ENCODE measurements at regions of chr19 and their contacts with region 1.

Region 1: GRCh38 chr19:40640744-40641143 is 39.6 kb downstream of the LTBP4 start:
- DNase-seq: no peak
- ATAC-seq: no peak
- H3K4me3 ChIP-seq: no peak overlapping the region
- H3K27ac ChIP-seq: no peak overlapping the region
- H3K4me1 ChIP-seq: peaks cover 5% of the 10 kb centered on the region; the same call in 1 of the 2 replicates
- H3K27me3 ChIP-seq: no peaks in the 10 kb centered on the region
- CTCF ChIP-seq: no peak
- EP300 ChIP-seq: no peak
- POLR2A ChIP-seq: no peak
- RAD21 ChIP-seq: no peak

Region 2: GRCh38 chr19:40305403-40305802 is 335.3 kb before region 1 on chr19:
- CTCF ChIA-PET with region 1: interaction called, 29 read pairs
- POLR2A ChIA-PET with region 1: no interaction called
- RAD21 ChIA-PET with region 1: interaction called, 13 read pairs
- SMC1A ChIA-PET with region 1: interaction called, 13 read pairs
- in situ Hi-C with region 1: no loop called
- intact Hi-C with region 1: no loop called
- DNase-seq: peak; percentile 38
- ATAC-seq: peak; percentile 87
- H3K4me3 ChIP-seq: no peak overlapping the region
- H3K27ac ChIP-seq: no peak overlapping the region
- H3K4me1 ChIP-seq: no peaks in the 10 kb centered on the region
- H3K27me3 ChIP-seq: no peaks in the 10 kb centered on the region
- CTCF ChIP-seq: peak; percentile 59 to 83 (median 77); a peak in 5 of 6 replicates
- EP300 ChIP-seq: no peak
- POLR2A ChIP-seq: no peak
- RAD21 ChIP-seq: peak; percentile 95

Region 3: GRCh38 chr19:40529093-40529954 is 111.4 kb before region 1 on chr19:
- CTCF ChIA-PET with region 1: interaction called, 13 read pairs
- POLR2A ChIA-PET with region 1: no interaction called
- RAD21 ChIA-PET with region 1: no interaction called
- SMC1A ChIA-PET with region 1: no interaction called
- in situ Hi-C with region 1: no loop called
- intact Hi-C with region 1: no loop called
- DNase-seq: peak; percentile 57
- ATAC-seq: peak; percentile 90
- H3K4me3 ChIP-seq: peak overlapping the region; percentile 32; the same call in 1 of the 2 replicates
- H3K27ac ChIP-seq: no peak overlapping the region
- H3K4me1 ChIP-seq: peaks cover 3% of the 10 kb centered on the region
- H3K27me3 ChIP-seq: no peaks in the 10 kb centered on the region; a peak in 1 of 4 replicates
- CTCF ChIP-seq: peak; percentile 95 to 98 (median 97)
- EP300 ChIP-seq: no peak
- POLR2A ChIP-seq: no peak
- RAD21 ChIP-seq: peak; percentile 38; the same call in 1 of the 2 replicates

Region 4: DNA sequence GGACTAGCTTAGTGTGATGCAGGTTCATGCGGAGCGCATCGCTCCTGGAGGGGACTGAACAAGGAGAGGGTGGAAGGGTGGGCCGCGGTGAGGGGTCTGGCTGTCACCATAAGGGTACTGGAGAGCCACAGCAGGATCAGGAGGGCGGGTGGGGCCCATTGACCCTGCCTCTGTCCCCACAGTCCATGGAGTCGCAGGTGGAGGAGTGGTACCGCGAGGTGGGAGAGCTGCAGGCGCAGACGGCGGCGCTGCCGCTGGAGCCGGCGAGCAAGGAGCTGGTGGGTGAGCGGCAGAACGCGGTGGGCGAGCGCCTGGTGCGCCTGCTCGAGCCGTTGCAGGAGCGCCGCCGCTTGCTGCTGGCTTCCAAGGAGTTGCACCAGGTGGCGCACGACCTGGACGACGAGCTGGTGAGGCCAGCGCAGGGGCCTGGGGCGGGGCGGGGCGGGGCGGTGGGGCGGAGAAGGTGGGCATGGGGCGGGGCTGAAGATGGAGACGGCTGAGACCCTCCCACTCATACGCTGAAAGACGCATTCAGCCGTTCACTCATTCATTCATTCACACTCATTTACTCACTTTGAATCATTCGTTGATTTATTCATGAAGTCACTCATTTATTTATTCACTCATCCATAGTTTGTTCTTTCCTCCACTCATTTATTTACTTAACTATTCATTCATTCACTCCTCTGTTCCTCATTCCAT is 91.6 kb before region 1 on chr19:
- CTCF ChIA-PET with region 1: interaction called, 28 read pairs
- POLR2A ChIA-PET with region 1: no interaction called
- RAD21 ChIA-PET with region 1: interaction called, 11 read pairs
- SMC1A ChIA-PET with region 1: interaction called, 3 read pairs
- in situ Hi-C with region 1: no loop called
- intact Hi-C with region 1: no loop called
- DNase-seq: no peak
- ATAC-seq: peak; percentile 97
- H3K4me3 ChIP-seq: no peak overlapping the region
- H3K27ac ChIP-seq: no peak overlapping the region
- H3K4me1 ChIP-seq: no peaks in the 10 kb centered on the region
- H3K27me3 ChIP-seq: peaks cover 0 to 3% of the 10 kb centered on the region in 2 experiments; a peak in 1 of 4 replicates
- CTCF ChIP-seq: peak in 2 of 3 experiments; percentile 53 to 63; a peak in 3 of 6 replicates
- EP300 ChIP-seq: no peak
- POLR2A ChIP-seq: no peak
- RAD21 ChIP-seq: peak; percentile 37

Region 5: DNA sequence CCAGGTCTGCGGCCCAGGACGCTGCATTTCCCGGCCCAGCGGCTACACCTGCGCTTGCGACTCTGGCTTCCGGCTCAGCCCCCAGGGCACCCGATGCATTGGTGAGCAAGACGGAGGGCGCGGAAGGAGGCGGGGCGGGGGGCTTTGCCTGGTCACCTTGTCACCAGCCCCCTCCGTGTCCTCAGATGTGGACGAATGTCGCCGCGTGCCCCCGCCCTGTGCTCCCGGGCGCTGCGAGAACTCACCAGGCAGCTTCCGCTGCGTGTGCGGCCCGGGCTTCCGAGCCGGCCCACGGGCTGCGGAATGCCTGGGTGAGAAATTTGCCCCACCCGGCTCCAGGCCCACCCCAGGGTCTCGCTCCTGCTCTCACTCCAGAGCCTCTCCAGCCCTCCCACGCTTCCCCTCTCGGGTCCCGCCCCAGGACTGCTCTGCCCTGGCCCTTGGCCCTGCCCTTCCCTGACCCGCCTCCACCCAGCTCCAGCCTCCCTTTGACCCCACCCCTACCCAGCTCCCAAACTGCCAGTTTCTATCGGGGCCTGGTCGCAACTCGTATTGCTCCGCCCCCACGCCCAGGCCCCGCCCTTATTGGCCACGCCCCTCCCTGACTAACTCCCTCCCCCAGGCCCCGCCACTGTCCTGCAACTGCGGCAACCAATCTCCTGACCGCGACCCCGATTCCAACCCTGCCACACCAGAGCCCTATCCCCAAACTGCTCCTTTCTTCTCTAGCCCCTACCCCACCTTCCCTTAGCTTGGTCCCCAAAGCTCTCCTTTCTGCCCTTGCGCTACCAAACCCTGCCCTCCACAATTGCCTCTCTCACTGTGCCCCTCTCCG is 31.0 kb before region 1 on chr19:
- CTCF ChIA-PET with region 1: interaction called, 106 read pairs
- POLR2A ChIA-PET with region 1: interaction called, 6 read pairs
- RAD21 ChIA-PET with region 1: interaction called, 49 read pairs
- SMC1A ChIA-PET with region 1: interaction called, 5 read pairs
- in situ Hi-C with region 1: no loop called
- intact Hi-C with region 1: no loop called
- DNase-seq: peak; percentile 70
- ATAC-seq: peak; percentile 74
- H3K4me3 ChIP-seq: peak overlapping the region; percentile 76
- H3K27ac ChIP-seq: no peak overlapping the region
- H3K4me1 ChIP-seq: peaks cover 17% of the 10 kb centered on the region
- H3K27me3 ChIP-seq: no peaks in the 10 kb centered on the region; a peak in 1 of 4 replicates
- CTCF ChIP-seq: 0 out of 6 replicates have a peak, but pooled peaks of 1 of the 3 experiments have one; percentile 0
- EP300 ChIP-seq: no peak
- POLR2A ChIP-seq: peak; percentile 71
- RAD21 ChIP-seq: no peak

Region 6: GRCh38 chr19:40623403-40624251 is 17.1 kb before region 1 on chr19:
- CTCF ChIA-PET with region 1: interaction called, 30 read pairs
- POLR2A ChIA-PET with region 1: interaction called, 3 read pairs
- RAD21 ChIA-PET with region 1: no interaction called
- SMC1A ChIA-PET with region 1: interaction called, 3 read pairs
- in situ Hi-C with region 1: no loop called
- intact Hi-C with region 1: no loop called
- DNase-seq: no peak
- ATAC-seq: peak; percentile 78
- H3K4me3 ChIP-seq: no peak overlapping the region
- H3K27ac ChIP-seq: no peak overlapping the region
- H3K4me1 ChIP-seq: peaks cover 7% of the 10 kb centered on the region; the same call in 1 of the 2 replicates
- H3K27me3 ChIP-seq: no peaks in the 10 kb centered on the region
- CTCF ChIP-seq: no peak
- EP300 ChIP-seq: no peak
- POLR2A ChIP-seq: no peak
- RAD21 ChIP-seq: no peak

Measured in GM12878 (cell line).